K562 (cell line): ENCODE measurements at regions of chr14 and their contacts with region 1.

Region 1: DNA sequence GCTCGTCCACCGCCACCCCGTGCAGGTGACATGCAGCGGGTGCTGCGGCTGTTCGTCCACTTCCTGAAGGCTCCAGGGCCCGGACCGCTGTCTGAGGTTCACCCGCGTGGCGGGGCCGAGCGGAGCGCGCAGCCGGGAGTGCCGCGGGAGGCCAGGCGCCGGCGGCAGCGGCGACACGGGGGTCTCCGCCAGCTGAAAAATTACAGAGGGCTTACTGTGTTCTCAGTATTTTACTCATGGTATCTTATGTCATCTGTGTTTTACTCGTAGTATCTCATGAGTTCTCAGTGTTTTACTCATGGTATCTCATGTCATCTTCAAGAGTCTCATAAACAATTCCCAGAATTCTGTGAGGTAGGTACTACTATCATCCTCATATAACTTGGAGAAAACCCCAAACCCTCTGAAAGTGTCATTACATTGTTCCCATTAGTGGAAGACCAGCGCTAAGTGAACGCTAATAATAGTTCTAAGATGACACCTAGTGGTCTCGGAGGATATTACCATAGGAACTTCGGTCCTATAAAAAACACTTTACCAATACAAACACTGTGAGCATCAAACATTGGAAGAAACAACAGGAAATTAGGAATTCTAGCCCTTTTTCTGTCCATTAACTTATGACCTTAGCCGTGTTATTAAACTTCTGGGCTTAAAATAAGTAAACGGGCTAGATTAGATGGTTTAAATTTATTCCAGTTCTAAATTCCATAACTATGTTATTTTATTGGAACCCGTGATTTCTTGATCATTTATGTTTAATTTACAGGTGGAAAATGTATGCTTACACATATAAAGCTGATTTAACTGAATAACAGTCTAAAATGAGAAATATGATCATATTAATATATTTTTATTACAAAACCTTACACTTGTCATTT is 32.4 kb downstream of the AK7 start:
- DNase-seq: peak; percentile 32 to 67 (median 36)
- ATAC-seq: peak; percentile 89
- H3K4me3 ChIP-seq: peak overlapping the region; percentile 30
- H3K27ac ChIP-seq: no peak overlapping the region
- H3K4me1 ChIP-seq: peaks cover 0 to 8% of the 10 kb centered on the region in 2 experiments; a peak in 2 of 5 replicates
- H3K27me3 ChIP-seq: no peaks in the 10 kb centered on the region
- CTCF ChIP-seq: peak; percentile 57 to 77 (median 65)
- EP300 ChIP-seq: no peak
- POLR2A ChIP-seq: no peak
- RAD21 ChIP-seq: peak; percentile 86 to 90

Region 2: DNA sequence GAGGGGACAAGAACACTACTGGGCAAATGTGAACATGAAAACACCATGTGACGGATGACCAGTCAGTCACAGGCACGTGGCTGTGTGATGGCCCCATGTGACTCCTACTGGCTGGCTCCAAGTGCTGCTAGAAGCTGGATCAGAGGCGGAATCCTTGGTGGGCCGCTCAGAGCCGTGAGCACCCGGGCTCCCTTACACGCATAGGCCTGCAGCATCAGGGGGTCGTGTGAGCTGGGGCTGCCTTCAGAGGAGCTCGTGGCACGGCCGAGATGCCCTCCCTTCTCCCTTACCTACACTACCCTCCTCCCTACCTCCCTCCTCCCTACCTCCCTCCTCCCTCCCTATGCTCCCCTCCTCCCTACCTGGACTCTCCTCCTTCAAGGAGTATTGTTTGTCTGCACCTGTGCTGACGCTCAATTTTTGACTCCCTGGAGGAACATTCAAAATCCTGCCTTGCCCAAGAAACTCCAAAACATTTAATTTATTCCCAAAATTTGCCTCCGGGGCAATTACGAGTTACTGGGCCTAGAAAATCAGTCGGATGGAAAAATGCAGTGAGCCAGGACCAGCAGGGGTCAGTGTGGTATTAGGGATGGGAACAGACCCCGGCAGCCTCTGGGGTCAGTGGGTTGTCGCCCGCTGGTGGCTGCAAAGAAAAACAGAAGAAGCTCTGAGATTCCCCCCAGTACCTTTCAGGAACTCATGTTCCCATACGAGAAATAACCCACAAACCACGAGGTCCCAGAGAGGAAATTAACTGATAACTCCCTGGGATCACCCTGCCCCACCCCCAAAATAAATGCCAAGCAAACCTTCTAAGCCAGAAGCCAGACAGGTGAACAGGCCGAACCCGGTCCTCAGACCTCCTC is 324.0 kb before region 1 on chr14:
- CTCF ChIA-PET with region 1: interaction called, 6 read pairs
- POLR2A ChIA-PET with region 1: interaction called, 3 read pairs
- in situ Hi-C with region 1: no loop called
- intact Hi-C with region 1: loop called (anchors 2 kb)
- DNase-seq: peak; percentile 70 to 75 (median 75)
- ATAC-seq: peak; percentile 93
- H3K4me3 ChIP-seq: no peak overlapping the region
- H3K27ac ChIP-seq: no peak overlapping the region
- H3K4me1 ChIP-seq: peaks cover 0 to 3% of the 10 kb centered on the region in 2 experiments; a peak in 1 of 5 replicates
- H3K27me3 ChIP-seq: peaks cover 0 to 7% of the 10 kb centered on the region in 2 experiments; a peak in 1 of 5 replicates
- CTCF ChIP-seq: peak; percentile 89 to 99 (median 99)
- EP300 ChIP-seq: no peak
- POLR2A ChIP-seq: no peak
- RAD21 ChIP-seq: peak; percentile 87 to 89

Region 3: GRCh38 chr14:96297000-96297399 is 127.3 kb before region 1 on chr14:
- CTCF ChIA-PET with region 1: interaction called, 25 read pairs
- POLR2A ChIA-PET with region 1: no interaction called
- in situ Hi-C with region 1: loop called (anchors 5 kb)
- intact Hi-C with region 1: loop called (anchors 2 kb)
- DNase-seq: peak in 1 of 4 experiments; percentile 9
- ATAC-seq: peak; percentile 61; the same call in 2 of the 3 replicates
- H3K4me3 ChIP-seq: no peak overlapping the region
- H3K27ac ChIP-seq: no peak overlapping the region
- H3K4me1 ChIP-seq: no peaks in the 10 kb centered on the region
- H3K27me3 ChIP-seq: no peaks in the 10 kb centered on the region
- CTCF ChIP-seq: peak in 1 of 3 experiments; percentile 58; a peak in 2 of 6 replicates
- EP300 ChIP-seq: no peak
- POLR2A ChIP-seq: no peak
- RAD21 ChIP-seq: peak; percentile 28 to 39; a peak in 2 of 4 replicates

Region 4: DNA sequence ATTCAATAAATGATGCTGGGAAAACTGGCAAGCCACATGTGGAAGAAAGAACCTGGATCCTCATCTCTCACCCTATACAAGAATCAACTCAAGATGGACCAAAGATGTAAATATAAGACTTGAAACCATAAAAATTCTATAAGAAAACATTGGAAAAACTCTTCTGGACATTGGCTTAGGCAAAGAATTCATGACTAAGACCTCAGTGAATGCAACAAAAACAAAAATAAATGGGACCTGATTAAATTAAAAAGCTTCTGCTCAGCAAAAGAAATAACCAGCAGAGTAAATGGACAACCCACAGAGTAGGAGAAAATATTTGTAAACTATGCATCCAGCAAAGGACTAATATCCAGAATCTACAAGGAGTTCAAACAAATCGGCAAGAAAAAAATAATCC is 85.8 kb before region 1 on chr14:
- CTCF ChIA-PET with region 1: no interaction called
- POLR2A ChIA-PET with region 1: no interaction called
- in situ Hi-C with region 1: no loop called
- intact Hi-C with region 1: no loop called
- DNase-seq: no peak
- ATAC-seq: no peak
- H3K4me3 ChIP-seq: no peak overlapping the region
- H3K27ac ChIP-seq: no peak overlapping the region
- H3K4me1 ChIP-seq: no peaks in the 10 kb centered on the region
- H3K27me3 ChIP-seq: no peaks in the 10 kb centered on the region
- CTCF ChIP-seq: no peak
- EP300 ChIP-seq: no peak
- POLR2A ChIP-seq: no peak
- RAD21 ChIP-seq: no peak

Region 5: GRCh38 chr14:96688629-96689028 is 264.3 kb after region 1 on chr14:
- CTCF ChIA-PET with region 1: no interaction called
- POLR2A ChIA-PET with region 1: no interaction called
- in situ Hi-C with region 1: no loop called
- intact Hi-C with region 1: no loop called
- DNase-seq: no peak
- ATAC-seq: no peak
- H3K4me3 ChIP-seq: no peak overlapping the region
- H3K27ac ChIP-seq: no peak overlapping the region
- H3K4me1 ChIP-seq: no peaks in the 10 kb centered on the region
- H3K27me3 ChIP-seq: peaks cover 3 to 23% of the 10 kb centered on the region in 2 experiments; a peak in 4 of 5 replicates
- CTCF ChIP-seq: no peak
- EP300 ChIP-seq: no peak
- POLR2A ChIP-seq: no peak
- RAD21 ChIP-seq: no peak